ENCODE measurements at regions of chr12 and their contacts with region 1.

Region 1: DNA sequence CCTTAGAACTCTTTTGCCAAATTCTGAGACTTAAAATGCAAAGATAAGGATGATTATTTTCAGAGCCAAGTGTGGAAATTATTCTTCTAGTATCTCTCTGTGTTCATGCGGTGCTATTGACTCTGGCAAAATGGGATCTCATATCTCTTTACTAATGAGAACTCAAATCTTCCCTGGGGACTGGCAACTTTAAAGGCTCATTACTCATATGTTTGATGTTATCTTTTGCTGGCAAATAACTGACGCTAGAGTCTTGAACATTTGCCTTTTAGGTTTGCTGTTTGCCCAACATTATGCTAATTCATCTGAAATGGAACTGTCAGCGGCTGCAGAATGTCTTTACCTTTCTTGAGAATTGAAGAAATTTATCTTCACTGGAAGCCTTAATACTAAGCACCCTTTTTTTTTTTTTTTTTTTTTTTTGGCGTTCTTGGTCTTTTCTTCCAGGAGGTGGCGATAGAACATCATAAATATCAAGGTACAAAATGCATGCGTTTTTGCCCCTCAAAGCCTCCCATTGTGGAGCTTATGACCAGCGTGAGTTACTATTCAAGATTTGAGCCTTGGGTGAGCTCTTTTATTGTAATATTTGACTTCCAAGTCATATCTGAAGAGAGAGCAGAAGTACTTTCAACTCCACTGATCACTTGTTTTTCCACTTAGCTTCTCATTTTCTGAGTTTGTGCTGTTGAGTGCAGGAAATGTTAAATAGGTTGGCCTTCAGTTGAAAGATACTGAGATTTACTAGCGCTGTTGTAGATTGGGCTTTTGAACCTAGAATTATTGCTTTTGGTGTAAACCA is 86.6 kb downstream of the CAND1 start:
- DNase-seq: peak; percentile 42
- ATAC-seq: peak; percentile 67
- H3K4me3 ChIP-seq: no peak overlapping the region
- H3K27ac ChIP-seq: no peak overlapping the region
- H3K4me1 ChIP-seq: no peaks in the 10 kb centered on the region
- H3K27me3 ChIP-seq: no peaks in the 10 kb centered on the region
- CTCF ChIP-seq: peak; percentile 57
- EP300 ChIP-seq: no peak
- POLR2A ChIP-seq: no peak
- RAD21 ChIP-seq: 0 out of 2 replicates have a peak, but pooled peaks have one; percentile 24

Region 2: DNA sequence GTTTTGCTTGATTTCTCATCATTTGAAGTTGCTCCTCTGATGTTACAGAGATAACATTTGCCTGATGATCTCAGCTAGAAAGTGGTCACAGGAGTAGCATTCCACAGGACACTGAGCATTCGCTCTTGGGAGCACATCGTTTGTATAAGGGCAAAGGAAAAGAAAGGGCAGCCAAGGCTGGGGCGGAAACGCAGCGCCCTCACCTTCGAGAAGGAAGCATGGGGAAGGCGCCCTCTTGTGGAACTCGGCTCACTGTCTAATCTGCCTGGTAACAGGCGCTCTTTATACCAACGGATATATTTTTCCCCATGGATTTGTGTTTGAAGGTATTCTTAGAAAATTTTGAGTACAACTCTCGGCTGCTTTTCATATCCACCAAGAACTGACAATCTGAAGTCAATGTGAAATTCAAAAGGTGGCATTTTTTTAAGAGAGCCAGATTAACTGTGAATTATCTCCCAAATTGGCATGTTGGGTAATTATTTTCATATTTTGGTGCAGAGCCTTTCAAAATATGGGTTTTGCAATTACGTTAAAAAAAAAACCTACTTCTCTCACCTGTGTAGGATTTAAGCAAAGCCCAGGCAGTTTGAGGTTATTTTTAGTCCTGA is 86.1 kb after region 1 on chr12:
- CTCF ChIA-PET with region 1: interaction called, 11 read pairs
- POLR2A ChIA-PET with region 1: no interaction called
- in situ Hi-C with region 1: loop called (anchors 5 kb)
- intact Hi-C with region 1: loop called (anchors 1 kb)
- DNase-seq: peak; percentile 58
- ATAC-seq: peak; percentile 99
- H3K4me3 ChIP-seq: no peak overlapping the region
- H3K27ac ChIP-seq: no peak overlapping the region
- H3K4me1 ChIP-seq: 0 out of 2 replicates have a peak, but pooled peaks cover 11% of the 10 kb centered on the region
- H3K27me3 ChIP-seq: peaks cover 0 to 2% of the 10 kb centered on the region in 2 experiments; a peak in 1 of 5 replicates
- CTCF ChIP-seq: peak; percentile 85
- EP300 ChIP-seq: peak in 1 of 2 experiments; percentile 43; a peak in 1 of 4 replicates
- POLR2A ChIP-seq: no peak
- RAD21 ChIP-seq: peak; percentile 49; the same call in 1 of the 2 replicates

Measured in HepG2 (cell line).